H1 (cell line): ENCODE measurements at regions of chr1 and their contacts with region 1.

Region 1: DNA sequence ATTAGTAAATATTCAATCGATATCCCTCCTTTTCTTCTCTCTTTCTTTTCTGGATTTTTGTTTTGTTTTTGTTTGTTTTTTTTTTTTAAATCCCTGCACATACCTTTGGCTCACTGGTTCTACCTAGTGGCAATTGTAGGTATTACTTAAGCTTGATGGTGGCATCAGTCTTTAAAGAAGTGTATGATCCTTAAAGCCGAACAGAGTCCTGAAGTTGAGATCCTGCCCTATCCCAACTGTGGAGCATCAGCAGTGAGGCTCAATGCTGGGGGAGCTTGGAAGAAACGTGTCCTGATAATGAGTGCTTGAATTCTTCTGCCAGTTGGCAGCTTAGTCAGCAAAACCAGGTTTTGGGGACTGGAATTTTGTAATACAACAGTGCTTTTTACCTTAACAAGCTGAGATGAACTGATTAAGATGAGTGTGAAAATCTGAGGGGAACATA is 60.8 kb downstream of the FASLG start:
- DNase-seq: no peak
- H3K4me3 ChIP-seq: no peak overlapping the region
- H3K27ac ChIP-seq: no peak overlapping the region
- H3K4me1 ChIP-seq: peaks cover 0 to 5% (median 0%) of the 10 kb centered on the region in 4 experiments; a peak in 1 of 7 replicates
- H3K27me3 ChIP-seq: no peaks in the 10 kb centered on the region
- CTCF ChIP-seq: peak in 2 of 3 experiments; percentile 54 to 59; a peak in 2 of 4 replicates
- EP300 ChIP-seq: no peak
- POLR2A ChIP-seq: no peak
- RAD21 ChIP-seq: peak; percentile 76 to 80

Region 2: GRCh38 chr1:172609528-172609927 is 110.2 kb before region 1 on chr1:
- CTCF ChIA-PET with region 1: interaction called, 96 read pairs
- POLR2A ChIA-PET with region 1: no interaction called
- DNase-seq: no peak
- H3K4me3 ChIP-seq: no peak overlapping the region
- H3K27ac ChIP-seq: no peak overlapping the region
- H3K4me1 ChIP-seq: no peaks in the 10 kb centered on the region
- H3K27me3 ChIP-seq: no peaks in the 10 kb centered on the region
- CTCF ChIP-seq: peak in 2 of 3 experiments; percentile 20 to 27; a peak in 2 of 4 replicates
- EP300 ChIP-seq: no peak
- POLR2A ChIP-seq: no peak
- RAD21 ChIP-seq: peak; percentile 28 to 43

Region 3: DNA sequence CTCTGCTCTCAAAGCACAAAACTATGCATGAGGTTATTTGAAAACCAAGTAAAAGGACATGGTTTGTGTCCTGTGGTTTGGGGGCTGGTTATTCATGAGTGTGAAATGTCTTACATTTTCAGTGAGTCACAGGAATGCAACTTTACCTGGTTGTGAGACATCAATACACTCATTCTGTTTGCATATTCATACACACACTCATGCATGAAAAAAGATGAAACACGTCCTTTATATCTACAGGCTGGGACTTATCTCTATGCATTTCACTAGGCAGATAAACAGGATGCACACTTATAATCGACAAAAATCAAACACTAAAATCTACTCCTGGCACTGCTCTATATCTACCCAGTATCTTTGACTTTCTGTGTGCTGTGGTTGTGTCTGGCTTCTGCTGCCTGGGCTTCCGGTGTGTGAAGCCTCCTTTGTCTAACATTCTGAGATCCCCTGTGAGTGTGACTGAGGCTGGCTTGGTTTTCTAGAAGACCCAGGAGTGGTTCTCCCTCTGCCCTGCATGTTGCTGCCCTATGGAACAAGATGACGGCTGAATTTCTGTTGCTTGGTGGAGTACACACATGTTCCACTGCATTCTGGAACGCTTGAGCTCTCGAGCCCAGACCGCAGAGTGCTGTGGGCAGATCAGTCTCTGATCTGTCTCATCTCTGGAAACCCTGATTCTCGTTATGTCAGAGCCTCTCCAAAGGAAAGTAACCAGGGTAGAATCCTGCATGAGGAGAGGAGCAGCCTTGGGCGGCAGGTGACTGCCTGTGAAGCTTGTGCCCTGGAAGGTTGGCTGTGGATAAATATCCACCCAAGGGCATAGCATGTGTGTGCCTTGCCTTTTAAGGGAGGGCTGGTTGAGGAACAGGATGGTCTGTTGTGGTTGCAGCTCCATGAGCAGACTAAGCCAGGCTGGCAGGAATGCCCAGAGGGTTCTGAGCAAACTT is 80.6 kb before region 1 on chr1:
- CTCF ChIA-PET with region 1: interaction called, 19 read pairs
- POLR2A ChIA-PET with region 1: no interaction called
- DNase-seq: no peak
- H3K4me3 ChIP-seq: no peak overlapping the region
- H3K27ac ChIP-seq: no peak overlapping the region
- H3K4me1 ChIP-seq: no peaks in the 10 kb centered on the region
- H3K27me3 ChIP-seq: no peaks in the 10 kb centered on the region
- CTCF ChIP-seq: no peak
- EP300 ChIP-seq: no peak
- POLR2A ChIP-seq: no peak
- RAD21 ChIP-seq: no peak

Region 4: DNA sequence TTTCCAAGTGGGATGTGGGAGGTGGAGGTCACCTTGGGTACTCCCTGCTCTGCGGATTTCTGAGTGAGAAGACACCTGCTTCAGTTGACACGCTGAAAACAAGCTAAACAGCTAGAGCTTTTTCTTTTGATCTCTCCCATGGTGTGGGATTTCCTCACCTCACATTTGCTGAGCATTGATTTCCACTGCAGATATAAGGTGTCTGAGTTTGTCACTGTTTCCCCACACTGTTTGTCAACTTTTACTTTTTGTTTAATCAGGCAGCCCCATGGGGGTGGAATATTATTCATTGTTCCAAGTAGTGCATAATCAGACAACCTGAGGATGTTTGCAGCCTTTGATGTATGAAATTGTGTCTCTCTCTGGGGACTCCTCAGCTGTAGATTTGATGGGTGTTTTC is 11.3 kb before region 1 on chr1:
- CTCF ChIA-PET with region 1: interaction called, 23 read pairs
- POLR2A ChIA-PET with region 1: no interaction called
- DNase-seq: no peak
- H3K4me3 ChIP-seq: no peak overlapping the region
- H3K27ac ChIP-seq: no peak overlapping the region
- H3K4me1 ChIP-seq: peaks cover 0 to 3% (median 0%) of the 10 kb centered on the region in 4 experiments; a peak in 2 of 7 replicates
- H3K27me3 ChIP-seq: no peaks in the 10 kb centered on the region
- CTCF ChIP-seq: no peak
- EP300 ChIP-seq: no peak
- POLR2A ChIP-seq: no peak
- RAD21 ChIP-seq: no peak

Region 5: DNA sequence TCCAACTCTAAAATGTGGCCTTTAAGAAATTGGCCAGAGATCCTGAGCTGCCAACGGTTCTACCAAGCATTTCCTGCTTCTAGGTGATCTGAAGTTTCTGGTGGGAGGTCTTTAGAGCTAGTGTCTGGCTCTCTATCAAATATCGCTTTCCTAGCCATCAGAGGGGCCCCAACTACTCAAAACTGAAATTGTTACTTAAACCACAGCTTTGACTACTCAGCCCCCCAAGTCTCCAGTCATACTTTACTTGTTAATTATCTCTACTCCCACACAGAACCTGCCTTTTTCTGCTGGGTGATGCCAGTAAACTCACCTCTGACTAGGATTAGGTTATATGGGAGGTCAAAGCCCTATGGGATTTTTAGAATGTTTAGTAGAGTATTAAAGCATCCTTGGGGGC is 34.2 kb after region 1 on chr1:
- CTCF ChIA-PET with region 1: no interaction called
- POLR2A ChIA-PET with region 1: no interaction called
- DNase-seq: no peak
- H3K4me3 ChIP-seq: no peak overlapping the region
- H3K27ac ChIP-seq: no peak overlapping the region
- H3K4me1 ChIP-seq: no peaks in the 10 kb centered on the region
- H3K27me3 ChIP-seq: no peaks in the 10 kb centered on the region
- CTCF ChIP-seq: no peak
- EP300 ChIP-seq: no peak
- POLR2A ChIP-seq: no peak
- RAD21 ChIP-seq: no peak

Region 6: GRCh38 chr1:172818841-172819527 is 99.3 kb after region 1 on chr1:
- CTCF ChIA-PET with region 1: no interaction called
- POLR2A ChIA-PET with region 1: no interaction called
- DNase-seq: no peak
- H3K4me3 ChIP-seq: no peak overlapping the region
- H3K27ac ChIP-seq: no peak overlapping the region
- H3K4me1 ChIP-seq: no peaks in the 10 kb centered on the region
- H3K27me3 ChIP-seq: no peaks in the 10 kb centered on the region
- CTCF ChIP-seq: no peak
- EP300 ChIP-seq: no peak
- POLR2A ChIP-seq: no peak
- RAD21 ChIP-seq: no peak